Heart left ventricle (tissue), 16 donors: ENCODE measurements at regions of chr21 and their contacts with region 1.

Region 1: DNA sequence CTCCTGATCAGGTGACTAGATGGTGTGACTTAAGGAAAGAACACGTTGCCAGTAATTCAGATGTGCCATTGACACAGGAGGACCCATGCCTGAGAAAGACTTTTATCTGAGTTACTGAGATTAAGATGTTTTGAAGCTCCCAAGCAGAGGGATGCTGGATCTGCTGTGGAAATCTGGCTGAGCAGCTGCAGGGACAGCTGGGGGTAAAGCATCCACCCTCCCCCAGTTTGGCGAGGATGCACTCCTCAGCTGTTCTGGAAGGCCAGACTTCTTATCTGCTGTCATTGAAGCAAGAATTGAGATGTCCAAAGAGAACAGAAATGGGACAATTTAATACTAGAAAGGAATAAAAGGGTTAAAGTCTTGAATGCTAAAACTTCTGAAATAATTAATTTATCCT is 25.7 kb downstream of the TTC3 start:
- DNase-seq: no peak
- ATAC-seq: no peak
- H3K4me3 ChIP-seq: no peak overlapping the region
- H3K27ac ChIP-seq: no peak overlapping the region
- H3K4me1 ChIP-seq: no peaks in the 10 kb centered on the region
- H3K27me3 ChIP-seq: no peaks in the 10 kb centered on the region
- CTCF ChIP-seq: no peak
- POLR2A ChIP-seq: no peak

Region 2: DNA sequence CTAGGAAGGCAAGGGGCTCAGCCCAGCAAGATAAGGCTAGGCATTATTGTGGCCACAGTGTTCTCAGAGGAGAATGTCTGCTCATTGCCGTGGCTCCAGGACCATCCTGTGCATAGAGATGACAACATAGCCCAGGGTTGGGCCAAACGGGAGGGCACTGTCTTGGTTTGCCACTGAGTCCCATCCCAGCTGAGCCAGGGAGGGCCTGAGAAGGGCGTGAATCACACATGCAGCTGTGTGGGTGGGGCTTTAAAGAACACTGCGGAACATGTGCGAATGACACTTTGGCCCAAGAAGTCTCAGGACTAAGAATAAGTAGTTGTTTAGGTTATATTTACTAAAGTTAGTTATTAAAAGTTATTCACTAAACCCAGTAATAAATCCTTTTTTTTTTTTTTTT is 695.0 kb before region 1 on chr21:
- intact Hi-C with region 1: loop called in 1 of 10 experiments (anchors 10 kb)
- DNase-seq: no peak
- ATAC-seq: no peak
- H3K4me3 ChIP-seq: no peak overlapping the region
- H3K27ac ChIP-seq: no peak overlapping the region
- H3K4me1 ChIP-seq: no peaks in the 10 kb centered on the region
- H3K27me3 ChIP-seq: no peaks in the 10 kb centered on the region
- CTCF ChIP-seq: no peak
- POLR2A ChIP-seq: no peak

Region 3: DNA sequence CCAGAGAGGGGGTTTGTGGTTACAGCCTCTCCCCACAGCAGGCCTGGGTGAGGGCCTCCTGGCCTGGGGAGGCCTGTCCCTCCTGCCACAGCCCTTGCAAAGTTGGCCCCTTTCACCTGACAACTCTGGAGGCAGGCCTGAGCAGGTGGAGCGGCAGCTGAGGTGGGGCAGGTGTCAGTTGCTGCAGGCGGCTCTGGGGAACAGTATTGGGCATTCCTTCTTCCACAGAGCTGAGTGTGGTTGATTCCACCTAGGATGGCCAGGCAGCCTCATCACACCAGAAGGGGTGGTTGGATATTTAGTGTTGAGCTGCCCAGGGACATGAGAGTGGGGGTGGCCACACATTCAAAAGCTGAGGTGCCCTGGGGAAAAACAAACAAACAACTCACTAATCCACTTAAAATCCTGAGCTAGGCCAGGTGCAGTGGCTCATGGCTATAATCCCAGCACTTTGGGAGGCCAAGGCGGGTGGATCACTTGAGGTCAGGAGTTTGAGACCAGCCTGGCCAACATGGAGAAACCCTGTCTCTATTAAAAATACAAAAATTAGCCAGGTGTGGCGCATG is 57.0 kb before region 1 on chr21:
- intact Hi-C with region 1: no loop called
- DNase-seq: no peak
- ATAC-seq: no peak
- H3K4me3 ChIP-seq: no peak overlapping the region
- H3K27ac ChIP-seq: no peak overlapping the region
- H3K4me1 ChIP-seq: no peaks in the 10 kb centered on the region
- H3K27me3 ChIP-seq: peaks cover 0 to 3% (median 0%) of the 10 kb centered on the region in 9 donors
- CTCF ChIP-seq: no peak
- POLR2A ChIP-seq: no peak

Region 4: GRCh38 chr21:37145635-37146111 is 46.9 kb after region 1 on chr21:
- intact Hi-C with region 1: no loop called
- DNase-seq: no peak
- ATAC-seq: no peak
- H3K4me3 ChIP-seq: no peak overlapping the region
- H3K27ac ChIP-seq: no peak overlapping the region
- H3K4me1 ChIP-seq: peaks cover 0 to 12% (median 7%) of the 10 kb centered on the region in 12 donors
- H3K27me3 ChIP-seq: no peaks in the 10 kb centered on the region
- CTCF ChIP-seq: no peak
- POLR2A ChIP-seq: no peak